ENCODE measurements at regions of chr13 and their contacts with region 1.

Region 1: DNA sequence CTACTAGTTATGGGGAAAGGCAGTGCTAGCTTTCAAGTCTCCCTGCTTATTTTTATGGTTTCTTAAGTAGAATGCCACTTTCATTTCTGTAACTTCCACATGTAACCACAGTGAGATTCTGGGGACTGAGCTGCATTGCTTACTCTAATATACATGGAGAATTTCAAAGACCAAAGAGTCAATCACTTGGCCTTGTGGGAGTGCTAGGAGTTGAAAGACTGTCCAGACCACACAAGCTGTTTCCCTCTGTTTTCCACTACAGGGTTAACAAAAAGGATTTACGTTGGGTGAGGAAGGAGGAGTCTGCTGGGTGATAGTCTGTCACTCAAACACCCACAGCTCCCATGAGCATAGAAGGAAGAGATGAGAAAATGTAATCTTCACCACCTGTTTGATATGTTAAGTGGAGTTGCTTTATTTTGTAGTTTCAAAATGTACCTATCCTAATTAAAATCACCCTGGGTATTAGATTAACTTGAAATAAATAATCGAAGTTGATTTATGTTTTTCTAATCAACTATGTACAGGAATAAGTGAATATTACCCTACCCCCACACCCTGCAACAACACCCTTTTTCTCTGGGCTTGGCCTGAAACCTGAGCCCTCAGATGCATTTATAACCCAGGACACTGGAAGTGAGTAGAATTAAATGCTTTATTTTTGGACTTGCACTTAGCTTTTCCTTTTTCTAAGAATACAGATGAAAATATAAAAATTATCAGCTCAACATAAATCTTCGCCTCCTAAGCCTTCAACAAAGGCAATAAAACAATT is 225.8 kb upstream of the SLC10A2 start:
- DNase-seq: no peak
- H3K4me3 ChIP-seq: no peak overlapping the region
- H3K27ac ChIP-seq: no peak overlapping the region
- H3K4me1 ChIP-seq: no peaks in the 10 kb centered on the region
- H3K27me3 ChIP-seq: no peaks in the 10 kb centered on the region
- CTCF ChIP-seq: no peak
- EP300 ChIP-seq: no peak
- POLR2A ChIP-seq: no peak

Region 2: GRCh38 chr13:103157016-103157415 is 135.0 kb before region 1 on chr13:
- intact Hi-C with region 1: no loop called
- DNase-seq: no peak
- H3K4me3 ChIP-seq: no peak overlapping the region
- H3K27ac ChIP-seq: no peak overlapping the region
- H3K4me1 ChIP-seq: no peaks in the 10 kb centered on the region
- H3K27me3 ChIP-seq: no peaks in the 10 kb centered on the region
- CTCF ChIP-seq: no peak
- EP300 ChIP-seq: no peak
- POLR2A ChIP-seq: no peak

Region 3: DNA sequence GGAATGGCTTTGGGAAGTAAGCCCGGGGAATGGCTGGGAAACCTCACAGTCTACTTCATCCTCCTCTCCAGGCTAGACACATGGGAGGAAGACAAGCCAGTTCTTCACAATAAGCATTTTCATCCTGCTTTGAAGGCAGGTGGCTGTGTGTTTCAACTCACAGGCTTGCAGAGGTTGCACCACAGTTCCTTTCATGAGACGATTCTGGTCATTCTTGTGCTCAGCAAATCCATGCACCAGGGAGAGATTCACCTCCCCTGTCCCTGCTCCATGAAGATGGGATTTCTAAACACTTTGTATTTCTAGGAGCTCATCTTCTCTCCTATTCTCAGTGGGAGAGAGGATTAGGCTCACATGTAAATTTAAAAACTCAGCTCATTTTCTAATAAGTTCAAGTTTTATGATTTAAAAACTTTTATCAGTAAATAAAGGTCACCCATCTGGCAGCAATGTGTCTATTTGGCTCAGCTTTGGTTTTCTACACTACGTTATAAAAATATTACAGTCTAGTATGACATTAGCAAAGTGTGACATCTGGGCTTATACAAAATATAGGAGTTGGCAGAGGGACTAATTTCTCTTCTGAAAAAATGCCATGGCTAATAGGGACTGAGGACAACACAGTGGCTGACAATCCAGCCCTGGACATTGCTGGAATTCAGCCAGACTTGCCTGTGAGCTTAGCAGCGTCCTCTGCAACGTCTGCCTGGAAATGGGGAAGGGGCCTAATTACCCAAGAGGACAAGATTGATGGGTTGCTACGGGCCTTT is 57.4 kb after region 1 on chr13:
- intact Hi-C with region 1: no loop called
- DNase-seq: no peak
- H3K4me3 ChIP-seq: no peak overlapping the region
- H3K27ac ChIP-seq: no peak overlapping the region
- H3K4me1 ChIP-seq: no peaks in the 10 kb centered on the region
- H3K27me3 ChIP-seq: no peaks in the 10 kb centered on the region
- CTCF ChIP-seq: no peak
- EP300 ChIP-seq: no peak
- POLR2A ChIP-seq: no peak

Region 4: GRCh38 chr13:104160536-104160935 is 868.6 kb after region 1 on chr13:
- intact Hi-C with region 1: loop called in 1 of 4 experiments (anchors 10 kb)
- DNase-seq: no peak
- H3K4me3 ChIP-seq: no peak overlapping the region
- H3K27ac ChIP-seq: no peak overlapping the region
- H3K4me1 ChIP-seq: no peaks in the 10 kb centered on the region
- H3K27me3 ChIP-seq: no peaks in the 10 kb centered on the region
- CTCF ChIP-seq: no peak
- EP300 ChIP-seq: no peak
- POLR2A ChIP-seq: no peak

Region 5: DNA sequence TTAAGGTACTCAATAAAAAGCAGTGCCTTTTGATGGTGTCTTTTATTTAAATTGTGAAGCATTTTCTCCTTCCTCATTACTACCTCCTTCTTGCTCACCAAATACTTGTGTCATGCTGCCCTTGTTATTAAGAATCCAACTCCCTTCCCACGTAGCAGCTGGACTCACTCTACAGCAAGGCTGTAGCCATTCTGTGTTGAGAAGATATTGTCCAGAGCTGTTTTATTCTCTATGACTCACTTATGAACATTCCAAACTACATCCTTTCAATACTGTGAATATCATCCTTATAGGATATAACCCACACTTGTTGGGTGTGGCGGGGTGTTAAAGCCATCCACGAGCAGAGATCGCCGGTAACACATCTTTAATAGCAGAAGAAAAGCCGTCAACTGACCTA is 1445.7 kb after region 1 on chr13:
- intact Hi-C with region 1: loop called in 1 of 4 experiments (anchors 5 kb)
- DNase-seq: no peak
- H3K4me3 ChIP-seq: no peak overlapping the region
- H3K27ac ChIP-seq: no peak overlapping the region
- H3K4me1 ChIP-seq: no peaks in the 10 kb centered on the region
- H3K27me3 ChIP-seq: no peaks in the 10 kb centered on the region
- CTCF ChIP-seq: no peak
- EP300 ChIP-seq: no peak
- POLR2A ChIP-seq: no peak